ENCODE measurements at regions of chr6 and their contacts with region 1.

Region 1: DNA sequence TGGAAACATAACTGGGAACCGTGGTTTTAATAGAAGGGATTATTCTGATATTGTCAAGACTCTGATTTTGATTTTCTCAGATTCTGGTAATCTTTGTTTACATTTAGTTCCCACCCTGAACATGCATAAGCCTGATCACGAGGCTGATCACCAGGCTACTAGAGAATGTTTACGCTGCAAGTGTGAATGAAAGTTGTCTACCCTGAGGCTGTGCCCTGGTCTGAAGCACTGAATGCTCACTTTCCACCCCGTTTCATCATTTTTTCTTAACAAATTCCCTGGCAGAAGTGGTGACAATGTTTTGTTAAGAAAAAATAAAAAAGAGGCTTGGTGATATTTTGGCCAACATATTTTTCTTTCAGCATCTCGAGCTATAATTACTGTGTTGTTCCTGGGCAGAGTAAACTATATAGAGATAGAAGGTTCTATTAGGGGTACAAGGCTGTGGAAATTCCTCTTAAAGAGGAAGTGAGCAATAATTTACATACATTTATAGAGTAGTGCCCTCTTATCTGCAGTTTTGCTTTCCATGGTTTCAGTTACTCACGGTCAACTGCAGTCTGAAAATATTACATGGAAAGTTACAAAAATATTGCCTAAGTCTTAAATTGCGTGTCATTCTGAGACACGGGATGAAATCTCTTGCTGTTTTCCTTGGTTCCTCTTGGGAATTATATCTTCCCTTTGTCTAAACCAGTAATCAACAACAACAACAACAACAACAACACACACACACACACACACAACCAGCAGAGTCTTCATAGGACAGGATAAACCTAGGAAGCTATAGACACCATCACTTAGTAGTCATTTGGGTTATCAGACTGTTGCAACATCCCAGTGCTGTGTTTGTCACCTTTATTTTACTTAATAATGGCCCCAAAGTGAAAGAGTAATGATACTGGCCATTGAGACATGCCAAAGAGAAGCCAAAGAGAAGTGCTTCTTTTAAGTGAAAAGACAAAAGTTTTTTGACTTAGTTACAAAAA is 566.6 kb upstream of the CITED2 start:
- DNase-seq: no peak
- H3K4me3 ChIP-seq: peak overlapping the region; percentile 31 to 32
- H3K27ac ChIP-seq: peak overlapping the region; percentile 46 to 56
- H3K4me1 ChIP-seq: peaks cover 2 to 25% of the 10 kb centered on the region in 2 donors
- H3K27me3 ChIP-seq: no peaks in the 10 kb centered on the region
- CTCF ChIP-seq: no peak

Region 2: DNA sequence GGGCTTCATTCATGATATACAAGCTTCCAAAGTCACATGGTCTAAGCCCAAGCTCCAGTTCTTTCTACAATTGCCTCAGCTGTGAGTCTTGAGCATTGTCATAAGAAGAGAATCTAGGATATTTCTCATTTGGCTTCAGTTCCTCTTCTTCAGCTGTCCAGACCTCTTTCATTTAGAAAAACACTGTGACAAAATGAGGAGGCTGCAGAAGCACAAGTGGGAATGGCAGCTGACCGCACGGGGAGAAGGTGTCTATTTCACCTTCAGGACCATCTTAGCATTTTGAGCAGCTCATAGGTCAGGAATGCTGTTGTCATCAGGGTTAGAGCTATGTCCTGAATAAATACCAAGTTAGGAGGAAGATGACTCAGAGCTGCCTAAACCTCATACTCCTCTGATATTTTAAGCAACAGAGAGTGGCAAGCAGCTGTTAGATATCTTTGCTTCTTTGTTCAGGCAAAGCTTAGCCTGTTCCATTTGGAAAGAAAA is 176.5 kb before region 1 on chr6:
- intact Hi-C with region 1: loop called (anchors 10 kb)
- DNase-seq: peak in 1 of 2 donors; percentile 71
- H3K4me3 ChIP-seq: peak overlapping the region in 1 of 2 donors; percentile 7
- H3K27ac ChIP-seq: peak overlapping the region; percentile 80 to 83
- H3K4me1 ChIP-seq: peaks cover 3 to 24% of the 10 kb centered on the region in 2 donors
- H3K27me3 ChIP-seq: no peaks in the 10 kb centered on the region
- CTCF ChIP-seq: no peak

Region 3: DNA sequence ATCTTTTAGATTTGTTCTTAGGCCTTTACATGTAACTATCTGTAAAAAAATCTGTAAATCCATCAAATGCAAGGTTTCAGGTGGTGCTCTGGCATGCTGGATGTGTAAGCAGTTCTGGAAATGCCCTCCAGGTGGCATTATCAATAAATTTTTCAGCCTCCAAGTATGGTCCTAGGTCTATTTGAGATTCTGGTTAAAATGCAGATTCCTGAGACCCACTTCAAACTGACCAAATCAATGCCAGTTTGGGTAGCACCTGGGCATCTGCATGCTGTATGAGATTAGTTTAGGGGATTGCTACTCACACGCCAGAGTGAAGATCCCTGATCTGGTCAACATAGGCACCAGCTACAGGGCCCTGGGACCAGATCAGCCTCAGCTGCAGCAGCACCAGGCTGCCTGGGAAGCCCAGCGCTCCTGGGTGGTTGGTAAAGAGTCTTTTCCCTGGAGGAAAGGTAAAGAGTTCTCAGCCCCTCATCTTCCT is 59.3 kb before region 1 on chr6:
- intact Hi-C with region 1: loop called (anchors 5 kb)
- DNase-seq: no peak
- H3K4me3 ChIP-seq: peak overlapping the region; percentile 1 to 32
- H3K27ac ChIP-seq: peak overlapping the region in 1 of 2 donors; percentile 69
- H3K4me1 ChIP-seq: peaks cover 4 to 16% of the 10 kb centered on the region in 2 donors
- H3K27me3 ChIP-seq: no peaks in the 10 kb centered on the region
- CTCF ChIP-seq: peak; percentile 43 to 54 (median 45)

Region 4: DNA sequence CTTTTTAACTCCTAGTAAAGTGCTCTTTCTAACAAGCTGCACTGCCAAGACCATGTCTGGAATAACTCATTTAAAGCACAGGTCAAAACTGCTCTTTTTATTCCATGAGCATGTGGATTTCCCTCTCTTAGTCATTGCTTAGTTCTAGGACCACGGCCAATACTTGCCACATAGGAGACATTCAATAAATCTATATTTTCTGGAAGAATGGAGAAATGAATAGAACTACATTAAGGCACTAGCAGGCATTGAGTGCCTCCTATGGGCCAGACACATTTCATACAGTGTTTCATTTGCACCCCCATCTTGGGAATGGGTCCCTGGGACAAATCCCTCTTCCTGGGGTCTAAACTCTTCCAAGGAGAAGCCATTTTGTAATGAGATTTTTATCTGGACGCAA is 13.8 kb before region 1 on chr6:
- intact Hi-C with region 1: no loop called
- DNase-seq: no peak
- H3K4me3 ChIP-seq: no peak overlapping the region
- H3K27ac ChIP-seq: no peak overlapping the region
- H3K4me1 ChIP-seq: peaks cover 0 to 17% of the 10 kb centered on the region in 2 donors
- H3K27me3 ChIP-seq: no peaks in the 10 kb centered on the region
- CTCF ChIP-seq: no peak

Region 5: DNA sequence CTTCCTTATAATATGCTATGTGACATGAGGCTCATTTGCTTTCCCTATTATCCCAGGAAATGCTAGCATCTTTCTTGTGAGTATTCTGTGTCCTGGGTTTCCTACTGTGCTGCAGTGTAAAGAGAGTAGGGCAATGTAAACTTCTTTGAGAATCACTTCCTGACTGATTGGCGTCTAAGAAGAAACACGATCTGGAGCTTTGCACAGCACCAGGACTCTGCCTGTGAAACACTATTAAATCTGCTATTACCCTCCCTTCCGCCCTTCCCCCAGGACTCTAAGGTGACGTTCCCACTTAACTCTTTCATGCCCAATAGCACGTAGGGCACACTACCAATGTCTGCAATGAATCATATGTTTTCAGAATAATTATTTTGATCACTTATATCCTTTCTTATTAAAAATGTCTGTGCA is 40.7 kb after region 1 on chr6:
- intact Hi-C with region 1: loop called (anchors 5 kb)
- DNase-seq: no peak
- H3K4me3 ChIP-seq: no peak overlapping the region
- H3K27ac ChIP-seq: peak overlapping the region; percentile 28 to 74
- H3K4me1 ChIP-seq: peaks cover 0 to 22% of the 10 kb centered on the region in 2 donors
- H3K27me3 ChIP-seq: no peaks in the 10 kb centered on the region
- CTCF ChIP-seq: no peak

Region 6: GRCh38 chr6:140062043-140063020 is 121.3 kb after region 1 on chr6:
- intact Hi-C with region 1: loop called (anchors 5 kb)
- DNase-seq: peak in 1 of 2 donors; percentile 64
- H3K4me3 ChIP-seq: no peak overlapping the region
- H3K27ac ChIP-seq: peak overlapping the region; percentile 19 to 47
- H3K4me1 ChIP-seq: peaks cover 0 to 9% of the 10 kb centered on the region in 2 donors
- H3K27me3 ChIP-seq: no peaks in the 10 kb centered on the region
- CTCF ChIP-seq: no peak